ENCODE measurements at regions of chr6 and their contacts with region 1.

Region 1: GRCh38 chr6:31087494-31088089 is 24.8 kb downstream of the C6orf15 start:
- DNase-seq: peak; percentile 77 to 96 (median 90)
- ATAC-seq: peak; percentile 99
- H3K4me3 ChIP-seq: no peak overlapping the region
- H3K4me3 Mint-ChIP-seq: no peak overlapping the region
- H3K27ac ChIP-seq: no peak overlapping the region
- H3K27ac Mint-ChIP-seq: no peak overlapping the region
- H3K4me1 ChIP-seq: peaks cover 10% of the 10 kb centered on the region
- H3K4me1 Mint-ChIP-seq: peaks cover 21% of the 10 kb centered on the region
- H3K27me3 ChIP-seq: no peaks in the 10 kb centered on the region
- H3K27me3 Mint-ChIP-seq: no peaks in the 10 kb centered on the region
- CTCF ChIP-seq: peak; percentile 74

Region 2: DNA sequence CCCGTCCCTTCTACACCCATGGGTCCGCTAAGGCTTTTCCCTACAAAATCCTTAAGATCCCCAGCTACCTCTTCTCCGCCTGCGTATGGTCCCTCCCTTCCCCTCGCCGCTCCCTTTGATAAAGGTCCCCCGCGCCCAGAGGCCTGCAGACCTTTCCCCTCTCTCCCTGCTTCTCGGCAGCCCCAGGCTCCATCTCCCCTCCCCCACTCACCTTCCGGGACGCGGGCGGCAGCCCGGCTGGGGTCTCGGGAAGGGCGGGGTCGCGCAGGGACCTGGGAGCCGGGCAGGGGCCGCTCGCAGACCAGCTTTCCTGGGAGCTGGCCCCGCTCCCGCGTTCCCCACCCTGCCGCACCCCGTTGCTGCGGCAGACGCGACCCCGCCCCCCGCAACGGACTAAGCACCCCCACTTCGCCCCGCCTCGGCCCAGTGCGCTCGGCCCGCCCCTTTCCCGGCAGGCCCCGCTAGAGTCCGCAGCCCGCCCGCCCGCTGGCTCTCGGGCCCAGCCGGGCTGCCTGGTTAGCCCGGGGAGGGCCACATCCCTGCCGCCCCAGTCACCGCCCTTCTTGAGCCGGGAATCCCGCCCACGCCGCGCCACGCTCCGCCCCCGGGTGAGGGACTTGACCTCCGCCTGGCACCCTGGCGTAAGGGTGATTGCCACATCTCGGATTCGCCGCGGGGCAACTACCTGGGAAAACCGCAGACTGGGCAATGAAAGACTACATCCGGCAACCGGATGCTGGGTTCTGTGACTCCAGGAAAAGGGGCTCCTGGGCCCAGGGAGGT is 345.1 kb before region 1 on chr6 and contains the start of gene FLOT1:
- CTCF ChIA-PET with region 1: no interaction called
- POLR2A ChIA-PET with region 1: interaction called, 3 read pairs
- intact Hi-C with region 1: loop called (anchors 5 to 10 kb)
- DNase-seq: peak; percentile 52 to 93 (median 76)
- ATAC-seq: peak; percentile 53
- H3K4me3 ChIP-seq: peak within 1 kb of the TSS; percentile 85
- H3K4me3 Mint-ChIP-seq: peak within 1 kb of the TSS; percentile 97
- H3K27ac ChIP-seq: peak within 1 kb of the TSS; percentile 31 to 76
- H3K27ac Mint-ChIP-seq: peak within 1 kb of the TSS; percentile 91
- H3K4me1 ChIP-seq: peaks cover 66% of the 10 kb centered on the region
- H3K4me1 Mint-ChIP-seq: peaks cover 61% of the 10 kb centered on the region
- H3K27me3 ChIP-seq: no peaks in the 10 kb centered on the region
- H3K27me3 Mint-ChIP-seq: no peaks in the 10 kb centered on the region
- CTCF ChIP-seq: no peak
- total RNA-seq, gene FLOT1: 31.6 TPM

Region 3: DNA sequence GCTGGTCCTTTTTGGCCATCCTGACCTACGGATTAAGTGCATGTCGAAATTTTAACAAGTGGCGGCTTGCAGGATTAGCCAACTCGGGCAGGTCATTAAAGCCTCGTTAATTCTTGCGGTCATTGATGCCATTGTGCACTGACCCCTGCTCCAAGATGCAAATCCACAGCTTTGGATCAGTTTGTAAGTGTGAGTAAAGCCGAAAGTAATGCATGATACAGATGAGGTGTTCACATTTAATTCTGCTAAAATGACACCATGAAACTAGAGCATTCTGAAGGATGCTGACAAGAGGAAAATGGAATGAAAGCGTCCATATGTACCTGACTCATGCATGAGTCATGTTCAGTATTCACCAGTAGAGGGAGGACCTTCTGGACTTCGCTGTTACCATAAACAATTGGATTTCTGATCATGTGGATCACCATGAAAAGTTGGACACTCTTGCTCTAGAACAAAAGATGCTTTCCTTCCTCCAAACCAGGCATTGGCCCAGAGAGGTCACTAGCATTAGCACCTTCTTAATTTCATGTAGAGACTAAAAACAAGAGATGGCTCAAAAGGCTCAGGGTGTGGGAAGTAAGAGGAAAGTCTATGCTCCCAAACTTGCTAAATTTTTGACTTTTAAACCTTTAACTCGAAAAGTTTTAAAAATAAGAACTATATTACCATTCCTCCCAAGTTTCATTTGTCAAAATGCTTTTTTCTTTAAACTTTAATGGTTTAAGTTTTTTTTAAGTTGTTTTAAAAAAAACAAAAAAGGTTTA is 29.3 kb before region 1 on chr6:
- CTCF ChIA-PET with region 1: interaction called, 3 read pairs
- POLR2A ChIA-PET with region 1: no interaction called
- intact Hi-C with region 1: loop called in 1 of 2 experiments (anchors 2 kb)
- DNase-seq: peak in 3 of 14 experiments; percentile 21 to 53 (median 49)
- ATAC-seq: peak; percentile 51
- H3K4me3 ChIP-seq: no peak overlapping the region
- H3K4me3 Mint-ChIP-seq: no peak overlapping the region
- H3K27ac ChIP-seq: no peak overlapping the region
- H3K27ac Mint-ChIP-seq: no peak overlapping the region
- H3K4me1 ChIP-seq: peaks cover 2% of the 10 kb centered on the region
- H3K4me1 Mint-ChIP-seq: no peaks in the 10 kb centered on the region
- H3K27me3 ChIP-seq: peaks cover 4 to 6% of the 10 kb centered on the region in 2 experiments
- H3K27me3 Mint-ChIP-seq: peaks cover 13% of the 10 kb centered on the region
- CTCF ChIP-seq: peak; percentile 45

Region 4: DNA sequence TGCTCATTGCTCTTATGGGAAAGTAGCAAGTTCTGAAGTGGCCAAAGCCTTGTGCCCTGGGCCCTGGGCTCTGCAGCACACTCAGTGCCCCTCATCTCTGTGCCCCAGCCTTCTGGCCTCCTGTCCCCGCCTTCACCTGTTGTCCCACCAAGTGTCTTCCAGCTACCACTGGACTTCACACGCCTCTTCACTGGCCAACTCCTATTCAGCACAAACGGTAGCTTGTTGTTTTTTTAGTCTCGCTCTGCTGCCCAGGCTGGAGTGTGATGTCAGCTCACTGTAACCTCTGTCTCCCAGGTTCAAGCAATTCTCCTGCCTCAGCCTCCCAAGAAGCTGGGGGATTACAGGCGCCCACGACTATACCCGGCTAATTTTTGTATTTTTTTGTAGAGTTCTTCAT is 65.2 kb after region 1 on chr6:
- CTCF ChIA-PET with region 1: no interaction called
- POLR2A ChIA-PET with region 1: no interaction called
- intact Hi-C with region 1: no loop called
- DNase-seq: no peak
- ATAC-seq: no peak
- H3K4me3 ChIP-seq: no peak overlapping the region
- H3K4me3 Mint-ChIP-seq: no peak overlapping the region
- H3K27ac ChIP-seq: no peak overlapping the region
- H3K27ac Mint-ChIP-seq: no peak overlapping the region
- H3K4me1 ChIP-seq: peaks cover 7% of the 10 kb centered on the region
- H3K4me1 Mint-ChIP-seq: peaks cover 10% of the 10 kb centered on the region
- H3K27me3 ChIP-seq: no peaks in the 10 kb centered on the region
- H3K27me3 Mint-ChIP-seq: no peaks in the 10 kb centered on the region
- CTCF ChIP-seq: no peak